GM10248 (cell line): ENCODE measurements at regions of chr17 and their contacts with region 1.

Region 1: GRCh38 chr17:1331708-1332107 is 52.2 kb downstream of the TRARG1 start:
- DNase-seq: no peak
- CTCF ChIP-seq: no peak

Region 2: GRCh38 chr17:1260086-1260769 is 71.5 kb before region 1 on chr17:
- CTCF ChIA-PET with region 1: interaction called, 48 read pairs
- POLR2A ChIA-PET with region 1: no interaction called
- DNase-seq: no peak
- CTCF ChIP-seq: no peak

Region 3: DNA sequence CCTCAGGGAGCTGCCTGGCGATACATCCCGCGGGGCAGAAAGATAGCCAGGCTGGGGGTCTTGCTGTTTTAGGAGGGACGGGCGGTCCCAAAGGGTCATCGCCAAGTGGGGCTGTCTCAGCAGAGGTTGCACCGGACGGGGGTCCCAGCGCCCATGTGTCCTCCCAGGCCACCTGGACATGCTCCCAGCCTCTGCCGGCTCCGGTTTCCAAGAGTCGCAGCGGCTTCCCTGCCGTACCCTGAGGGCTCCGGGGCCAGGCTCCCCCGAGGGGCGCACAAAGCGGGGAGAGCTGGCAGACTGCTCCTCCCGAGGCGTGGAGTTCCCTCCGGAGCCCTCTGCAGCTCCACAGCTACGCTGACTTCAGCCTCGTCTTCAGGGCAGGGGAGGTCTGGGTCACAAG is 51.1 kb before region 1 on chr17:
- CTCF ChIA-PET with region 1: interaction called, 17 read pairs
- POLR2A ChIA-PET with region 1: no interaction called
- DNase-seq: no peak
- CTCF ChIP-seq: no peak

Region 4: DNA sequence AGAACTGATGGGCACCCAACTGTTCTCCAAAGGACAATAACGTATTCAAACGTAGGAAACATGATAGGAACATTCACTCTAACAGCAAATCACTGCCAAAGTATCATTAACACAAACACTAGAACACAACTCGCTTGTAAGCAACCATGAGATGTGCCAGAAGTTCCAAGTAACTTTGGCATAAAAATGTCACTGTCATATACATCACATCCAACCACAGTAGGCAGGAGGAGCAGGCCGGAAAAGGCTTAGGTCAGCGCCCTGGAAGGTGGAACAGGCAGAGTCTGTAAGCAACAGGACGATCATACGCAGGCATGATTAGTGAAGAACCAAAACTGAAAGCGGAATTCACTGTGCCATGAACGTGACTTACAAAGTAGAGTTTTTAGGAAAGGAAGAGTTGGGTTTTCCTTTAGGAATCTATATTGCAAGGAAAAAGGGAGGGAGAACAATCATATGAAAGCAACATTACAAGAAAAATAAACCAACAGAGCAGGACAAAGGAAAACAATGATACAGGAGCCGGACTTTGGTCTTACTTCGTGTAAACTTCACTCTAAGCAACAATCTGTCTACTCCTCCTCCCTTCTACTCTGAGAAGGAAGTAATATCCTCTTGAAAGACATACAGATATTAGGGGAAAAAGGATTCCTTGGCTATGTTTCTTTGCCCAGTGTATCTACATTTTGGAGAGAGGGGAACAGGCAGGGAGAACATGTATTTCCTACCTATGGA is 16.0 kb after region 1 on chr17:
- CTCF ChIA-PET with region 1: interaction called, 11 read pairs
- POLR2A ChIA-PET with region 1: no interaction called
- DNase-seq: no peak
- CTCF ChIP-seq: no peak

Region 5: GRCh38 chr17:1413281-1413791 is 81.6 kb after region 1 on chr17:
- CTCF ChIA-PET with region 1: no interaction called
- POLR2A ChIA-PET with region 1: no interaction called
- DNase-seq: no peak
- CTCF ChIP-seq: no peak